Heart left ventricle (tissue), 16 donors: ENCODE measurements at regions of chr7 and their contacts with region 1.

Region 1: GRCh38 chr7:70975754-70976153 is 156.2 kb upstream of the GALNT17 start:
- DNase-seq: no peak
- ATAC-seq: no peak
- H3K4me3 ChIP-seq: no peak overlapping the region
- H3K27ac ChIP-seq: no peak overlapping the region
- H3K4me1 ChIP-seq: no peaks in the 10 kb centered on the region
- H3K27me3 ChIP-seq: no peaks in the 10 kb centered on the region
- CTCF ChIP-seq: no peak
- POLR2A ChIP-seq: no peak

Region 2: GRCh38 chr7:70953331-70953741 is 22.4 kb before region 1 on chr7:
- intact Hi-C with region 1: loop called in 6 of 10 experiments (anchors 1 to 2 kb)
- DNase-seq: no peak
- ATAC-seq: no peak
- H3K4me3 ChIP-seq: no peak overlapping the region
- H3K27ac ChIP-seq: no peak overlapping the region
- H3K4me1 ChIP-seq: no peaks in the 10 kb centered on the region
- H3K27me3 ChIP-seq: no peaks in the 10 kb centered on the region
- CTCF ChIP-seq: no peak
- POLR2A ChIP-seq: no peak